Activated CD4-positive, alpha-beta T cell treated with anti-CD3 and anti-CD28 coated beads, Interleukin-2, amount 10 ng/mL, durations not matched to agents 24 days and 14 days (primary cell): ENCODE measurements at regions of chr5 and their contacts with region 1.

Region 1: GRCh38 chr5:16934123-16934522 is 2.0 kb downstream of the MYO10 start:
- DNase-seq: peak; percentile 73
- H3K4me3 Mint-ChIP-seq: no peak overlapping the region
- H3K27ac Mint-ChIP-seq: no peak overlapping the region
- H3K4me1 Mint-ChIP-seq: peaks cover 8% of the 10 kb centered on the region
- H3K27me3 Mint-ChIP-seq: peaks cover 62% of the 10 kb centered on the region

Region 2: DNA sequence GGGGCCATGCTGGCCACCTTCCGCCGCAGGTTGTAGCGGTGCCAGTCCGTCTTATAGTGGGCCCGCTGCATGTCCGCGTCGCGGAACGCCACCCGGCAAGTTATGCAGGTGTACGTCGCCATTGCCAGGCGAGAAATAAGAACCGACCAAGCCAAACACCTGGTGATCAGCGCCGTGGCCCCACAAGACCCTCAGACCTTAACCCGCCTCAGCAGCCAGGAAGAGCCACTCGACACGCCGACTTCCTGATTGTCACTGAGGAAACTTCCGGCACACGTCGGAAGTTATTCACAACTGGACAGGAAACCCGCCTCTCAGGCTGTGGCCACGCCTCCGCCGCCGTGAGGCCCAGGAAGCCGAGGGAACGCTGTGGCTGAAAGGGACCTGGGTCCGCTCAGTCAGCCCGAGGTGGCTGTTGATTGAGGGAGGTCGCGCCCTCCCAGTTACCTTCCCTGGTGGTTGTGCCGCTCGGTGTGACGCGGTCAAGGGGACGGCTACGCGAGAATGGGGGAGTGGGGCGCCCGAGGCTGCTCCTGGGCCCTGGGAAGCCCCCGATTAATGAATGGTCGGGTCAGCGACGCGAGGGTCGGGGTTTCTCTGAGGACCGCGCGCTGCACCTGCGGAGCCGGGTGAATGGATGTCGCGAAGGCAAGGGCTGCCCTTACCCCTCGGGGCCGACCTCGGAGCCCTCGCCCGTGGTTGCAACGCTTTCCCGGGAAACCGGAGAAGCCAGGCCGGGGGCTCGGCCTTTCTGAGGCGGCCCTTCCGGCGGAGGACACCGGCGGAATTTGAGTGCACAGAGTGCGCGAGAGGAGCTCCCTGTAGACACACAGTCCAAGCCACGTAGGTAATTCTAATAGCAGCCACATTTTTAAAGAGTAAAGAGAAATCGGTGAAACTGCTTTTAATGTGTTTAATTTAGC is 468.3 kb before region 1 on chr5 and contains the start of gene ZNF622:
- intact Hi-C with region 1: loop called (anchors 5 kb)
- DNase-seq: peak; percentile 97
- H3K4me3 Mint-ChIP-seq: peak within 1 kb of the TSS; percentile 99
- H3K27ac Mint-ChIP-seq: peak within 1 kb of the TSS; percentile 95
- H3K4me1 Mint-ChIP-seq: peaks cover 54% of the 10 kb centered on the region
- H3K27me3 Mint-ChIP-seq: no peaks in the 10 kb centered on the region
- total RNA-seq, gene ZNF622: 40.7 and 43.0 TPM in 2 replicates

Region 3: DNA sequence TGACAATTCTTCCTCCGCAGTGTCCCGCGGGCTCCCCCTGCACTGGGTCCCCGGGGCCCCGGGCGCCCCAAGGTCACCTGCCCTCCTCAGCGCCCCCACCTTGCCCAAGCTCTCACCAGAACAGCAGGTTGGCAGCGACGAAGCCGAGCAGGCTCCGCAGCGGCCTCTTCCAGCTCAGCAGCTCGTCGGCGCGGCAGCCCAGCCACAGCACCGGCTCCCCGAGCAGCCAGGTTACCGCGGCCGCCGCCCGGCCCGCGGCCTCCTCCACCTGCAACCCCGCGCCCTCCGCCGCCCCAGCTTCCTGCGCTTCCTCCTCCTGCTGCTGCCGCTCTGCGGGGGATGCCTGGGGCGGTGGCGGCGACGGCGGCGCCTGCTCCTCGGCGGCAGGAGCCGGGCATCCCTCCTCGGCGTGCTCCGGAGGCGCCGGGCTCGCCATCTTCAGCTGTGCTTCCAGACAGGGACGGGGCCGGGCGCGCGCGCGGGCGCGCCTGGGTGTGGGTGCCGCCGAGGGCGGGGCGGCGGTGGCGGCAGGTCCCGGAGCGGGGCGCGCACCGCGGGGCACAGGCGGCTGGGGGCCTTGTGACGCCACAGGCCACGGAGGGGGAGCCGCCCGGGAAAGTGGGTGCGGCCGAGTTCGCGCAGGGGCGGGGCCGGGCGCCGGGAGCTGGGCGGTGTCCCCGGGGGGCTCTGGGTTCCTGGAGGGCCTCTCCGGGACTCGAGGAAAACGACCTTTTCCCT is 317.4 kb before region 1 on chr5 and contains the start of gene RETREG1:
- intact Hi-C with region 1: loop called (anchors 10 kb)
- DNase-seq: peak; percentile 95
- H3K4me3 Mint-ChIP-seq: no peak within 1 kb of the TSS
- H3K27ac Mint-ChIP-seq: peak within 1 kb of the TSS; percentile 97
- H3K4me1 Mint-ChIP-seq: peaks cover 39% of the 10 kb centered on the region
- H3K27me3 Mint-ChIP-seq: no peaks in the 10 kb centered on the region
- total RNA-seq, gene RETREG1: 21.1 and 21.5 TPM in 2 replicates

Region 4: GRCh38 chr5:16744164-16744880 is 189.8 kb before region 1 on chr5:
- intact Hi-C with region 1: no loop called
- DNase-seq: no peak
- H3K4me3 Mint-ChIP-seq: no peak overlapping the region
- H3K27ac Mint-ChIP-seq: no peak overlapping the region
- H3K4me1 Mint-ChIP-seq: no peaks in the 10 kb centered on the region
- H3K27me3 Mint-ChIP-seq: peaks cover 10% of the 10 kb centered on the region

Region 5: GRCh38 chr5:16784843-16785791 is 149.0 kb before region 1 on chr5:
- intact Hi-C with region 1: loop called (anchors 10 kb)
- DNase-seq: no peak
- H3K4me3 Mint-ChIP-seq: no peak overlapping the region
- H3K27ac Mint-ChIP-seq: no peak overlapping the region
- H3K4me1 Mint-ChIP-seq: peaks cover 4% of the 10 kb centered on the region
- H3K27me3 Mint-ChIP-seq: no peaks in the 10 kb centered on the region

Region 6: GRCh38 chr5:16897224-16897704 is 36.9 kb before region 1 on chr5:
- intact Hi-C with region 1: no loop called
- DNase-seq: no peak
- H3K4me3 Mint-ChIP-seq: no peak overlapping the region
- H3K27ac Mint-ChIP-seq: no peak overlapping the region
- H3K4me1 Mint-ChIP-seq: no peaks in the 10 kb centered on the region
- H3K27me3 Mint-ChIP-seq: no peaks in the 10 kb centered on the region

Region 7: DNA sequence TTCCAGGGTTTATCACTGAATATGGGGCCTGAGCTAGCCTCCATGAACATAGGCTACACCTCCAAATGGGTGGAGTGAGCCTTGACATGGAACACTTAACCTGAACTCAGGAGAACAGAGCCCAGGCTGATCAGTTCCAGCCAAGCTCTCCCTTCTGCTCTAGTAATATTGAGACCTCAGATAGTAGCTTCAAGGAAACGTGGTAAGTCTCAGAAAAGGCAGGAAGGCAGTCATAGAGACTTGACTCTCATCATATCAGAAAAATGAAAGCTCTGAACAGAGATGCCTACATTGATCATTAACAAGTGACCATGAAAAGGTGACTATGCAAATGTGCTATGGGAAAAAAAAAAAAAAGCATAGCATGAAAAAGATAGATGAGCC is 42.5 kb after region 1 on chr5:
- intact Hi-C with region 1: no loop called
- DNase-seq: no peak
- H3K4me3 Mint-ChIP-seq: no peak overlapping the region
- H3K27ac Mint-ChIP-seq: no peak overlapping the region
- H3K4me1 Mint-ChIP-seq: no peaks in the 10 kb centered on the region
- H3K27me3 Mint-ChIP-seq: no peaks in the 10 kb centered on the region

Region 8: GRCh38 chr5:17189381-17190036 is 255.4 kb after region 1 on chr5:
- intact Hi-C with region 1: loop called (anchors 10 kb)
- DNase-seq: peak; percentile 85
- H3K4me3 Mint-ChIP-seq: no peak overlapping the region
- H3K27ac Mint-ChIP-seq: no peak overlapping the region
- H3K4me1 Mint-ChIP-seq: no peaks in the 10 kb centered on the region
- H3K27me3 Mint-ChIP-seq: no peaks in the 10 kb centered on the region

Region 9: DNA sequence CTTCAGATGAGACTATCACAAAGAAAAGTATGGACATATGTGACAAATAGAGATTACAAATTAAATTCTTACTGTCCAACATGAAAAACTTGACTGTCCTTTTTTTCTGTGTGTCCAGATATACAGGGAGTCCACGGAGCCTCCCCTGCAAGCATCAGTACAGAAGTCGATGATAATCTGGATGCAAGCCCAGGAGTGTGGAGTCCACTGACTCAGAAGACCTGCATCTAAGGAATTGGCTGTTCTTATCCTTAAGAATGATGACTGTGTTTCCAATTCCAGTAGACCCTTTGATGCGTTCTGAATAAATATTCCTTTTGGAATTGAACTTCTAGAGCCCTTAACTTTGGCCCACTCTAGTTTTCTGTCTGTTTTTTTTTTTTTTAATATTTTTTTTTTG is 507.2 kb after region 1 on chr5:
- intact Hi-C with region 1: no loop called
- DNase-seq: no peak
- H3K4me3 Mint-ChIP-seq: no peak overlapping the region
- H3K27ac Mint-ChIP-seq: no peak overlapping the region
- H3K4me1 Mint-ChIP-seq: no peaks in the 10 kb centered on the region
- H3K27me3 Mint-ChIP-seq: no peaks in the 10 kb centered on the region